Activated CD4-positive, alpha-beta T cell treated with anti-CD3 and anti-CD28 coated beads for 36 hours (primary cell): ENCODE measurements at regions of chr16 and their contacts with region 1.

Region 1: GRCh38 chr16:74695450-74696422 is 4.9 kb downstream of the MLKL start:
- DNase-seq: peak; percentile 78
- ATAC-seq: peak; percentile 79
- H3K4me3 Mint-ChIP-seq: peak overlapping the region; percentile 63
- H3K27ac Mint-ChIP-seq: peak overlapping the region; percentile 60
- H3K4me1 Mint-ChIP-seq: peaks cover 45% of the 10 kb centered on the region
- H3K27me3 Mint-ChIP-seq: no peaks in the 10 kb centered on the region

Region 2: GRCh38 chr16:74296432-74297144 is 399.1 kb before region 1 on chr16 and contains the start of gene PSMD7:
- CTCF ChIA-PET with region 1: no interaction called
- POLR2A ChIA-PET with region 1: no interaction called
- intact Hi-C with region 1: loop called in 1 of 2 experiments (anchors 2 kb)
- DNase-seq: peak; percentile 95
- ATAC-seq: peak; percentile 91
- H3K4me3 Mint-ChIP-seq: peak within 1 kb of the TSS; percentile 98
- H3K27ac Mint-ChIP-seq: peak within 1 kb of the TSS; percentile 99
- H3K4me1 Mint-ChIP-seq: peaks cover 34% of the 10 kb centered on the region
- H3K27me3 Mint-ChIP-seq: no peaks in the 10 kb centered on the region
- total RNA-seq, gene PSMD7: 122 to 134 TPM

Region 3: DNA sequence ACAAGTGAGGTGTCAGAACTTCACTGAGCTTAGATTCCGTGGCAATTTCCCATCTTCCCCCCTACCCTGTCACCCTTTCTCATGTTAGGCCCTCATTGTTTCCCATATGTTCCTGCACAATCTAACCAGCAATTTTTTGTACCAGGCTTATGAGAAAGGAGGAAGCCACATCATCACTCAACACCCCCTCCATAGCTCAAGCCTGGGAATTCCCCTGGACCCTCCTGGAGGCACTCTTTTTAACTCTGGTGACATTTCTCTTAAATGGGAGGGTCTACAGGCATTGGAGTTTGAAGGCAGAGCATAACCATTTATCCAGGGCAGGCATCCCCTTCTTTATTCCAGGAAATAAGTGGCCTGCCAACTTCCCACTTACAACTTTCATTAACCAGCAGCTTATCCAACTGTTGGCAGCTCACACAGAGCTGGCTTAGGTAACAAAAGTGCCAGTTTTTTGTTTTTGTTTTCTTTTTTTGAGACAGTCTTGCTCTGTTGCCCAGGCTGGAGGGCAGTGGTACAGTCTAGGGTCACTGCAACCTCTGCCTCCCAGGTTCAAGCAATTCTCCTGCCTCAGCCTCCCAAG is 78.4 kb before region 1 on chr16:
- CTCF ChIA-PET with region 1: no interaction called
- POLR2A ChIA-PET with region 1: no interaction called
- intact Hi-C with region 1: no loop called
- DNase-seq: no peak
- ATAC-seq: peak; percentile 42
- H3K4me3 Mint-ChIP-seq: no peak overlapping the region
- H3K27ac Mint-ChIP-seq: peak overlapping the region; percentile 29
- H3K4me1 Mint-ChIP-seq: peaks cover 13% of the 10 kb centered on the region
- H3K27me3 Mint-ChIP-seq: no peaks in the 10 kb centered on the region

Region 4: GRCh38 chr16:74709441-74709877 is 13.7 kb after region 1 on chr16:
- CTCF ChIA-PET with region 1: interaction called, 27 read pairs
- POLR2A ChIA-PET with region 1: no interaction called
- intact Hi-C with region 1: no loop called
- DNase-seq: peak; percentile 90
- ATAC-seq: peak; percentile 99
- H3K4me3 Mint-ChIP-seq: no peak overlapping the region
- H3K27ac Mint-ChIP-seq: no peak overlapping the region
- H3K4me1 Mint-ChIP-seq: peaks cover 6% of the 10 kb centered on the region
- H3K27me3 Mint-ChIP-seq: no peaks in the 10 kb centered on the region

Region 5: GRCh38 chr16:74774203-74775116 is 78.7 kb after region 1 on chr16 and contains the start of gene FA2H:
- CTCF ChIA-PET with region 1: no interaction called
- POLR2A ChIA-PET with region 1: no interaction called
- intact Hi-C with region 1: loop called in 1 of 2 experiments (anchors 2 kb)
- DNase-seq: peak; percentile 84
- ATAC-seq: peak; percentile 99
- H3K4me3 Mint-ChIP-seq: peak within 1 kb of the TSS; percentile 46
- H3K27ac Mint-ChIP-seq: no peak within 1 kb of the TSS
- H3K4me1 Mint-ChIP-seq: peaks cover 6% of the 10 kb centered on the region
- H3K27me3 Mint-ChIP-seq: peaks cover 38% of the 10 kb centered on the region
- total RNA-seq, gene FA2H: not detected

Region 6: DNA sequence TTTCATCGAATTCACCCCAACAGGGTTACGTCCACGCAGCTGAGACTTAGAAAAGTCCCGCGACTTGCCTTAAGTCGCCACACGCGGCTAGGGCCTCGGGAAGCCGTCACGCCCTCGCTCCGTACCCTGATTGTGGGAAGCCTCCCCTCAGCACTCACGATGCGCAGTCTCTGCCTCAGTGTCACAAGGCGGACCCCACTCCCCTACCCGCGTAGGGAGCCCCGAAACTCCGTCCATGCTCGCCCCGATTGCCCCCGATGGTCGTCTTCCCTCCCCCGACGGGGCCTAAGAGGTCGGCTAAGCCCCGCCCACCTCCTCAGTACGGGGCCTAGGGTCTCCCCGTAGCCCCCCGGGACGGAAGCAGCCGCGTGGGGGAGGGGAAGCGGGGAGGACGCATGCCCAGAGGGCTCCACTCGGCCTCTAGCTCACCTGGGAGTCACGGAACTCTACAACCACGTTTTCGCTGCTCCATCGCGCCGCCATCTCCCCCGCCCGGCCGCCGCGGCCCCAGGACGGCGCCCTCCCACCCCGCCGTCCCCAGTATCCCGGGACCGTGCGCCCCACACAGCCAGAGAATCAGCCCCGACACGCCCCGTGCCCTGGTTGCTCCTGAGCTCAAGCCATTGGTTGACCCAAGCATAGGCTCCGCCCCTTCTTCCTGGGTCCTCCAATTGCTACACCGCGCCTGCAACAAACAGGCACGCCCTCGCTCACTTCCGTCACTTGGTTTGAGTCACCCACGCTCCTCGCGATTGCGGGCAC is 289.0 kb after region 1 on chr16 and contains the start of gene WDR59:
- CTCF ChIA-PET with region 1: no interaction called
- POLR2A ChIA-PET with region 1: no interaction called
- intact Hi-C with region 1: loop called in 1 of 2 experiments (anchors 2 kb)
- DNase-seq: peak; percentile 100
- ATAC-seq: peak; percentile 100
- H3K4me3 Mint-ChIP-seq: peak within 1 kb of the TSS; percentile 85
- H3K27ac Mint-ChIP-seq: peak within 1 kb of the TSS; percentile 85
- H3K4me1 Mint-ChIP-seq: peaks cover 17% of the 10 kb centered on the region
- H3K27me3 Mint-ChIP-seq: no peaks in the 10 kb centered on the region
- total RNA-seq, gene WDR59: 69.2 to 91.4 TPM